ENCODE measurements at regions of chr11 and their contacts with region 1.

Region 1: GRCh38 chr11:3797329-3798095 is at the start of gene NUP98:
- DNase-seq: peak; percentile 100
- H3K4me3 Mint-ChIP-seq: peak within 1 kb of the TSS; percentile 99
- H3K27ac Mint-ChIP-seq: peak within 1 kb of the TSS; percentile 99
- H3K4me1 Mint-ChIP-seq: peaks cover 35% of the 10 kb centered on the region
- H3K27me3 Mint-ChIP-seq: no peaks in the 10 kb centered on the region
- total RNA-seq, gene NUP98: 122 and 129 TPM in 2 replicates

Region 2: GRCh38 chr11:3781423-3781822 is 16.1 kb before region 1 on chr11:
- intact Hi-C with region 1: loop called (anchors 1 kb)
- DNase-seq: no peak
- H3K4me3 Mint-ChIP-seq: peak overlapping the region; percentile 38
- H3K27ac Mint-ChIP-seq: peak overlapping the region; percentile 71
- H3K4me1 Mint-ChIP-seq: peaks cover 46% of the 10 kb centered on the region
- H3K27me3 Mint-ChIP-seq: no peaks in the 10 kb centered on the region

Region 3: DNA sequence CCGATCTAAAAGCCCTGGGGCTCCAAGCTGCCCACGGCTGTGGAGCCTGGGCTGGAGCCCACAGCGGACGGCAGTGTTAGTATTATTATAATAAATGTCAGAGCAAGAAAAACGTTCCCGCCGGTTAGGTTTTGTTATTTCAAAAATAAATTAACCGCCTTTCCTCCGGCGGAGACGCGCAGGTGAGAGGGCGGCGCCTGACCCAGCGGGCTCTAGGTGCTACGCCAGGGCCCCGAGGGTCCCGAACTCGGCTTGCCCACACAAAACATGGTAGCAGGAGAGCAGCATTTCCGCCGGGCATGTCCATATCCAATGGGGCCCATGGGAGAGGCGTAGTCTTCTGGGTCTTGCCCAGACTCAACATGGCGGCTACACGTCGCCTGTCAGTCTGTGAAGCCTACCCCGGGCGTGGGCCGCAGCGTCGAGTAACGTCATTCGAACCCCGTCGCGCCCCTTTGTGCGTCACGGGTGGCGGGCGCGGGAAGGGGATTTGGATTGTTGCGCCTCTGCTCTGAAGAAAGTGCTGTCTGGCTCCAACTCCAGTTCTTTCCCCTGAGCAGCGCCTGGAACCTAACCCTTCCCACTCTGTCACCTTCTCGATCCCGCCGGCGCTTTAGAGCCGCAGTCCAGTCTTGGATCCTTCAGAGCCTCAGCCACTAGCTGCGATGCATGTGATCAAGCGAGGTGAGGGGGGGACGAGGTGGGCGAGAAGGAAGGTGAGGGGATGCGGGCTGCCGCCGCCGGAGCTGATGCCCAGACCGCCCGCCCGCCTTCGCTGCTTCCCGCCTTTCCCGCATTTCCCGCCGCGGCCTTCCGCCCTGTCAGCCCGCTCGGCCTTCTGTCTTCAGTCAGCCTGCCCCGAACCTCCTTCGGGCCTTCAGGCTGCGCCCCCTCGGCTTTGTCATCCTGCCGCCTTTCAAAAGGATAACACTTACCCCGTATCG is 297.1 kb after region 1 on chr11 and contains the start of gene RRM1:
- intact Hi-C with region 1: loop called (anchors 1 kb)
- DNase-seq: peak; percentile 98
- H3K4me3 Mint-ChIP-seq: peak within 1 kb of the TSS; percentile 98
- H3K27ac Mint-ChIP-seq: peak within 1 kb of the TSS; percentile 97
- H3K4me1 Mint-ChIP-seq: peaks cover 78% of the 10 kb centered on the region
- H3K27me3 Mint-ChIP-seq: no peaks in the 10 kb centered on the region
- total RNA-seq, gene RRM1: 166 and 184 TPM in 2 replicates

Measured in activated CD4-positive, alpha-beta T cell treated with anti-CD3 and anti-CD28 coated beads, Interleukin-2, amount 10 ng/mL, durations not matched to agents 24 days and 14 days (primary cell).